ENCODE measurements at regions of chrX and their contacts with region 1.

Region 1: DNA sequence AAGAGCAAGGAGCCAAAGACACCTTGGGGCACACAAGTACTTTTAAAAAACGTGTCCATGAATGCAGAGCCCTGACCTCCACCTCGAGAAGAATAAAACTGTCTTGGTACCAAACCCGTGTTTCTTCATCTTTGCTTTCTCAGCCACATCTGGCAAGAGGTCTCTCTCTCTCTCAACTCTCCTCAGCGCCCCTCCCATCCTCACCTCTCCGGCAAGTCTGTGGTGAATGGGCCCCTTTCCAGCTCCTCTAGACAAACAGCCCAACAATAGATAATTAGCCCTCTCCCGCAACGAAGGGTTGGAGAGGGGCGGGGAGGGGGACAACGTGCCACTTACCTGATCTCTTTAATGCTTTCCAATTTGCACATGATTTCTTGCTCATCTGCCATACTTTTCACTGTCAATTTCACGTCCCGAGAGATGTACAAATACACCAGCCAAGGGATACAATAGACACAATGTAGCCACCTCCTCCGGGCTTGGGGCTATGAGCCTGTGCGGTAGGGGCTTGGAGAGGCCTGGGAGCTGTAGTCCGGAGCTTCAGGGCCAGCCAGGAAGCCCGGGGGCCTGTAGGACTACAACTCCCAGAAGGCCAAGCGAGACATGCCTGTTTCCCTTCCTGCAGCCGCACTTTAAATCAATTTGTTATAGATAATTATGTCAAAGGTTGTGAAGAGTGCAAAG is at the start of gene ZC4H2:
- DNase-seq: peak; percentile 24 to 80
- ATAC-seq: peak; percentile 86 to 94 (median 92)
- H3K4me3 ChIP-seq: peak within 1 kb of the TSS; percentile 49
- H3K4me3 Mint-ChIP-seq: peak within 1 kb of the TSS; percentile 95
- H3K27ac ChIP-seq: no peak within 1 kb of the TSS
- H3K27ac Mint-ChIP-seq: peak within 1 kb of the TSS; percentile 65 to 80
- H3K4me1 ChIP-seq: peaks cover 5% of the 10 kb centered on the region
- H3K4me1 Mint-ChIP-seq: peaks cover 19 to 22% of the 10 kb centered on the region in 2 donors
- H3K27me3 ChIP-seq: no peaks in the 10 kb centered on the region
- H3K27me3 Mint-ChIP-seq: peaks cover 0 to 11% of the 10 kb centered on the region in 2 donors
- CTCF ChIP-seq: no peak
- total RNA-seq, gene ZC4H2: 3.1 to 5.1 (median 4.5) TPM

Region 2: DNA sequence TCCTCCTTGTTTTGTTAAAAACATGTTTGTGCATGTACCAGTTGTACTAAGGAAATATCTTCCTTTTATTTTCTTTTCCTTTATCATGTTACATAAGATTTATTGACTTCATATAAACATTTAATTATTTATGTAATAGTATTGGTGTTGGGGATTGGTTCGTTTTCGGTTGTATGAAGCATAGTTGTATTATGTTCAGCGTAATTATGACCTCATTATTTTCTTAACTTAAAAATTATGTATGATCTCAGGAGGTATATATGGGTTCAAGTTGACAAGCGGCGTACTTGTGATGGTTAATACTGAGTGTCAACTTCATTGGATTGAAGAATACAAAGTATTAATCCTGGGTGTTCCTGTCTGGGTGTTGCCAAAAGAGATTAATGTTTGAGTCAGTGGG is 344.4 kb before region 1 on chrX:
- intact Hi-C with region 1: no loop called
- DNase-seq: no peak
- ATAC-seq: no peak
- H3K4me3 ChIP-seq: no peak overlapping the region
- H3K4me3 Mint-ChIP-seq: no peak overlapping the region
- H3K27ac ChIP-seq: no peak overlapping the region
- H3K27ac Mint-ChIP-seq: no peak overlapping the region
- H3K4me1 ChIP-seq: no peaks in the 10 kb centered on the region
- H3K4me1 Mint-ChIP-seq: no peaks in the 10 kb centered on the region
- H3K27me3 ChIP-seq: no peaks in the 10 kb centered on the region
- H3K27me3 Mint-ChIP-seq: peaks cover 0 to 4% of the 10 kb centered on the region in 2 donors
- CTCF ChIP-seq: no peak

Region 3: GRCh38 chrX:65034668-65035445 is 58.7 kb after region 1 on chrX:
- intact Hi-C with region 1: loop called (anchors 10 kb)
- DNase-seq: peak; percentile 54 to 89
- ATAC-seq: peak; percentile 85 to 93 (median 89)
- H3K4me3 ChIP-seq: peak within 1 kb of the TSS; percentile 69
- H3K4me3 Mint-ChIP-seq: peak within 1 kb of the TSS; percentile 91
- H3K27ac ChIP-seq: peak within 1 kb of the TSS; percentile 84
- H3K27ac Mint-ChIP-seq: peak within 1 kb of the TSS; percentile 86 to 91
- H3K4me1 ChIP-seq: no peaks in the 10 kb centered on the region
- H3K4me1 Mint-ChIP-seq: peaks cover 5 to 8% of the 10 kb centered on the region in 2 donors
- H3K27me3 ChIP-seq: no peaks in the 10 kb centered on the region
- H3K27me3 Mint-ChIP-seq: peaks cover 2 to 17% of the 10 kb centered on the region in 2 donors
- CTCF ChIP-seq: peak; percentile 12

Region 4: GRCh38 chrX:65581661-65582339 is 605.7 kb after region 1 on chrX:
- intact Hi-C with region 1: no loop called
- DNase-seq: peak; percentile 35 to 79
- ATAC-seq: peak; percentile 68 to 93 (median 80)
- H3K4me3 ChIP-seq: no peak overlapping the region
- H3K4me3 Mint-ChIP-seq: no peak overlapping the region
- H3K27ac ChIP-seq: no peak overlapping the region
- H3K27ac Mint-ChIP-seq: no peak overlapping the region
- H3K4me1 ChIP-seq: peaks cover 9% of the 10 kb centered on the region
- H3K4me1 Mint-ChIP-seq: peaks cover 8% of the 10 kb centered on the region in 2 donors
- H3K27me3 ChIP-seq: no peaks in the 10 kb centered on the region
- H3K27me3 Mint-ChIP-seq: peaks cover 2 to 4% of the 10 kb centered on the region in 2 donors
- CTCF ChIP-seq: peak; percentile 71

Region 5: DNA sequence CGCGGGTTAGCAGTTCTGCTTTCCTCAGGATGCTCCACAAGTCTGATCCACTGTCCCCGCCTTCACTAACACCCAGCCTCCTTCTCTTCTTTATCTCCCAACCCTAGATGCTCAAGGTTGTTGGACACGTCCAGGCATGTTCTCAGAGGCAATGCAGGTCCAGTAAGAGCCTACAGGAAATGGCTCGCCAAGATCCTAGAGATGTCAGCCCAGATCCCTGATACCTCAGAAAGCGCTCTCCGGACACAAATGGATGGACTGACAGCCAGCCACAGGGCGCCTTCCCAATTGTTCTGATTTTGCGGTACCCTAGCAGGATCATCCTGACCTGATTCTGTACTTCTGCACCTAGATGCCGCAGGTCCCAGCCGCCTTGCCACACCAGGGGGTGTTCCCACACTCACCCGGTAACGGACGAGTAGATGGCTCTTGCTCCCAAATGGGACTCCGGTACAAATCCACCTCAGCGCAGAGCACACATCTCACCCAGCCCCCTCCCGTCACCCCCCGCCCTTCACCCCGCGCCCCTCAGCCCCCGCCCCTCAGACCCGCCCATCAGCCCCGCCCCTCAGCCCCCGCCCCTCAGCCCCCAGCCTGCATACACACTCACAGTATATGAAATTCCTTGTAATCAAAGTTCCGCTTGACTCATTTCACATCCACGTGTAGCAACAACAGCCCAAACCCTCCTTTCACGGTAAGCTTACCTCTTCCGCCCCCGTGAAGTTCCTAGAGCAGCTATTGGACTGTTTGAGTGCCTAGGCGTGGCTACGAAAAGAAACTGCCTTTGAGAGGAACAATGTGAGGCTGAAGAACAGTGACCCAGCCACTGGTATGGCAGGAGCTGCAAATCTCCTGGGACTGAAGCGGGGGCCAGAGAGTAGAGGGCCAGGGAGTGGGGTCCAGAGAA is 1662.7 kb after region 1 on chrX and contains the start of gene EDA2R:
- intact Hi-C with region 1: no loop called
- DNase-seq: peak in 1 of 2 donors; percentile 34
- ATAC-seq: peak in 2 of 3 donors; percentile 72 to 77
- H3K4me3 ChIP-seq: peak within 1 kb of the TSS; percentile 5
- H3K4me3 Mint-ChIP-seq: peak within 1 kb of the TSS; percentile 67
- H3K27ac ChIP-seq: no peak within 1 kb of the TSS
- H3K27ac Mint-ChIP-seq: no peak within 1 kb of the TSS
- H3K4me1 ChIP-seq: peaks cover 9% of the 10 kb centered on the region
- H3K4me1 Mint-ChIP-seq: peaks cover 0 to 14% of the 10 kb centered on the region in 2 donors
- H3K27me3 ChIP-seq: no peaks in the 10 kb centered on the region
- H3K27me3 Mint-ChIP-seq: peaks cover 0 to 12% of the 10 kb centered on the region in 2 donors
- CTCF ChIP-seq: no peak
- total RNA-seq, gene EDA2R: 0.07 to 0.43 (median 0.43) TPM